Cardiac septum (tissue), 1 donor: ENCODE measurements at regions of chr12 and their contacts with region 1.

Region 1: GRCh38 chr12:27733052-27733656 is 22.5 kb downstream of the MRPS35 start:
- DNase-seq: no peak

Region 2: DNA sequence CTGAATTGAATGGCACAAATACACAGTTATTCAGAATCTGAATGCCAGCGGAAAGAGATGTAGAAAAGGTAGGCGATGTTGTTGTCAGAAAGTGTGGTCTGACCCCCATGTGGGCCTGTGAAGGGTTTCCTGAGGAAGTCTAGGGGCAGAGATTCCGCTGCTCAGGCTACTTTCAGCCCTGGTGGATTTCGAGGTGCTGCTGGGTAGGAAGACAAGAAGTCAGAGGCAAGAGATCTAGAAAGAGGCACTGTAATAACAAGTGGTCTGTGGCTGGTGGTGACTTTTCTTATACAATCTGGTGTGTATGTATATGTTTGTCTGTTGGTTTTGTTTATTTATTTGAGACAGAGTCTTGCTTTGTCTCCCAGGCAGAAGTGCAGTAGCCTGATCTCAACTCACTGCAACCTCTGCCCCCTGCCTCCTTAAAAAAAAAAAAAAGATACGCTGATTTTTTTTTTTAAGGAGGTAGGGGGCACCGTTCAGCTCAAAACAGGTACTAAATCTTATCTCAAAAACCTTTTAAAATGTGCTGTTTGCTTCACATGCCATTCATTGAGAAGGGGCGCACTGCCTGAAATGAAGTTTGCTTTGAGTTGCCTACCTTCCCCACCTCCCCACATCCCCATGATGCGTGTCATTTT is 74.0 kb after region 1 on chr12:
- intact Hi-C with region 1: no loop called
- DNase-seq: no peak

Region 3: GRCh38 chr12:27821259-27821973 is 88.3 kb after region 1 on chr12:
- intact Hi-C with region 1: loop called (anchors 5 kb)
- DNase-seq: no peak

Region 4: DNA sequence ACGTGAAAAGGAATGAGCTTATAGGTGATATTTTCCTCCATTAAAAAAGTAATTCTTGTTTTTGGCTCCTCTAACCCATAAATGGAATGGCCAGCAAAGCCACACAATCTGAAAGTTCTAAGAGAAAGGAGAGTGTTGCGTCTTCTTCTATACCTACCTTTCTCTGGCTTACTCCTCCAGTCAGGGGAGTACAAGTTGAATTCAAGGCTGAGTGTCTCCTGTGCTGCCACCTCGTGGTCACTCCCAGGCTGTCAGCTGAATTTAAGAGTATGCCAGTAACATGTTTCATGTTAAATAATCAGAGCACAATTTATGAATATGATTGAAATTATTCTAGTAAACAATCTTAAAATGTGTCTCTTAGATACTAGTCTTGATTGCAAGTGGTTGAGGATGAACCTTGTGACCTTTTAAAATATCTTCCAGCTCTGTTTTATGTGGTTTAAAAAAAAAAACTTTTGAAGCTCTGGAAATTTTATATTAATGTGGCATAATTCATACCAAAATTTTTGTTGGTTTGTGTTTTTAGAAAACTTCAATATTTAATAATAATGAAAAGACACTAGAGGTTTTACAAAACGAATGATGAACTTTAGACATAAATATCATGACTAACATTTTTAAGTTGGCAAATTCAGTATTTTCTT is 207.7 kb after region 1 on chr12:
- intact Hi-C with region 1: loop called (anchors 5 kb)
- DNase-seq: peak; percentile 79

Region 5: GRCh38 chr12:27999521-27999920 is 266.4 kb after region 1 on chr12:
- intact Hi-C with region 1: no loop called
- DNase-seq: no peak

Region 6: GRCh38 chr12:28872654-28873268 is 1139.6 kb after region 1 on chr12:
- intact Hi-C with region 1: loop called (anchors 10 kb)
- DNase-seq: no peak